BJ (cell line): ENCODE measurements at regions of chr12 and their contacts with region 1.

Region 1: GRCh38 chr12:122471324-122472226 is 29.2 kb downstream of the ZCCHC8 start:
- DNase-seq: peak; percentile 37
- H3K4me3 ChIP-seq: no peak overlapping the region
- H3K27me3 ChIP-seq: no peaks in the 10 kb centered on the region
- CTCF ChIP-seq: peak; percentile 74

Region 2: GRCh38 chr12:122421821-122422729 is 49.5 kb before region 1 on chr12 and contains the start of gene CLIP1:
- CTCF ChIA-PET with region 1: interaction called, 13 read pairs
- POLR2A ChIA-PET with region 1: no interaction called
- DNase-seq: no peak
- H3K4me3 ChIP-seq: peak within 1 kb of the TSS; percentile 56
- H3K27me3 ChIP-seq: no peaks in the 10 kb centered on the region
- CTCF ChIP-seq: peak; percentile 51
- polyA plus RNA-seq, gene CLIP1: 81.2 and 104 TPM in 2 replicates

Region 3: DNA sequence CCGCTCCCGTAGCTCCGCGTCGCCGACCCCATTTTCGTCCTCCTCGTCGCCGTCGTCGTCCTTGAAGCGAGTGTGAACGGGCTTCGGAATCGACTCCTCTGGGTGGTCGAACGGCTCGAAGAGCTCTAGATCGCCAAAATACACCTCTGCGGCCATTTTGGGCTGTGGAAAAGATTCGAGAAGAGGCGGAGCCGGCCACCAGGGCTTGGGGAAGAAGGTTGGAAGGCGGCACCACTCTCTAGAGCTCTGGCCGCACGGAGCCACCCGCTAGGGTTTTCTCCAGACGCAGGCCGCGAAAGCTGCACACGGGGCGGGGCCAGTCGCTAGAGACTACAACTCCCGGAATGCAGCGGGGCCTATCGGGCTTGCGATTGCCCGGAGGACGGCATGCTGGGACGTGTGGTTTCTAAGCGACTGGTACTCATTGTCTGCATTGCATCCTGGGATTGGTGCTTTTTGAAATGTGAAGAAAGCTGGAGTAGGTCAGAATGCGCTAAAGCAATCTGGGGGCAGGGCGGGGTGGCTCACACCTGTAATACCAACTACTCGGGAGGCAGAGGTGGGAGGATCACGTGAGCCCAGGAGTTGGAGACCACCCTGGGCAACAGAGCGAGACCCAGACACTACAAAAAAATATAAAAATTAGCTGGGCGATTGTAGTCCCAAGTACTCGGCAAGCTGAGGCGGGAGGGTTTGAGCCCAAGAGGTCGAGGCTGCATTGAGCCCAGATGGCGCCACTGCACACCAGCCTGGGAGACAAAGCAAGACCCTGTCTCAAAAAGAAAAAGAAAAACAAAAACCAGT is 29.3 kb after region 1 on chr12 and contains the start of gene ZCCHC8:
- CTCF ChIA-PET with region 1: interaction called, 12 read pairs
- POLR2A ChIA-PET with region 1: no interaction called
- DNase-seq: peak; percentile 89
- H3K4me3 ChIP-seq: peak within 1 kb of the TSS; percentile 92
- H3K27me3 ChIP-seq: no peaks in the 10 kb centered on the region
- CTCF ChIP-seq: no peak
- polyA plus RNA-seq, gene ZCCHC8: 12.7 and 15.0 TPM in 2 replicates